ENCODE measurements at regions of chr9 and their contacts with region 1.

Region 1: DNA sequence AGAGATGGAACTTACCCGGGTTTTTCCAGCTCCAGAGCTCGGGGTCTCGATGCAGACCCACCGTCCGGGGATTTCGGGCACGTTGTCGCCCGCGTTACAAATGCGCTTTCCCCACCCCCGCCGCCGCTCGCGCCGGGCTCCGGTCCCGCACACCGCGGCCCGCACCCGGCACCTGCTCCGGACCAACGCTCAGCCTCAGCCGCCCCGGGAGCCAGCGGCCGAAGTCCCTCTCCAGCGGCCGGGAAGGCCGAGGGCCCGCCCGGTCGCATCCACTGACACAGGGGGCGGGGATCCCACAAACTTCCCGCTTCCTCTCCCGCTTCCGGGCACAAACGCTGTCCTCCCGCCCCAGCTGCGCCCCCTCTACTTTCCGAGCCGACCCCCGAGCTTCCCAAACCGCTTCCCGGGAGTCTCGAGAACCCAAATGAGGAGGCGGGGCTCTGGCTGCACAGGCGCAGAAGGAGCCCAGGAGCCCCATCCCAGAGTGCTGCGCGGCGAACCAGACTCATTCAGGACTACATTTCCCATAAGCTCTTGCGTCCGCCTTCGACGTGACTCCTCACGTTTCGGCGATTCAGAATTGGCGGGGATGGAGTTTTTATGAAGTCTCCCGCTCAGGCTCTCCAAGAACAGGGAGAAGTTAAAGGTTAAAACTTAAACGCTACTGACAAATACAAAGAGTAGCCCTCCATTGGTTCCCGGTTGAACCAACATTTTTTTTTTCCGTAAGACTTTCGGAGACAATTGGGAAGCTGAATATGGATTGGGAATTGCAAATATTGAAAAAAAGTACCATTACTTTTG is at the start of gene ZNF782:
- DNase-seq: peak; percentile 94
- H3K4me3 ChIP-seq: peak within 1 kb of the TSS; percentile 56 to 76 (median 72)
- H3K27ac ChIP-seq: peak within 1 kb of the TSS; percentile 82 to 88 (median 86)
- H3K4me1 ChIP-seq: peaks cover 9 to 42% (median 24%) of the 10 kb centered on the region in 4 donors
- H3K27me3 ChIP-seq: no peaks in the 10 kb centered on the region
- CTCF ChIP-seq: no peak
- EP300 ChIP-seq: no peak
- POLR2A ChIP-seq: no peak
- total RNA-seq, gene ZNF782: 8.2 to 22.4 (median 18.4) TPM

Region 2: DNA sequence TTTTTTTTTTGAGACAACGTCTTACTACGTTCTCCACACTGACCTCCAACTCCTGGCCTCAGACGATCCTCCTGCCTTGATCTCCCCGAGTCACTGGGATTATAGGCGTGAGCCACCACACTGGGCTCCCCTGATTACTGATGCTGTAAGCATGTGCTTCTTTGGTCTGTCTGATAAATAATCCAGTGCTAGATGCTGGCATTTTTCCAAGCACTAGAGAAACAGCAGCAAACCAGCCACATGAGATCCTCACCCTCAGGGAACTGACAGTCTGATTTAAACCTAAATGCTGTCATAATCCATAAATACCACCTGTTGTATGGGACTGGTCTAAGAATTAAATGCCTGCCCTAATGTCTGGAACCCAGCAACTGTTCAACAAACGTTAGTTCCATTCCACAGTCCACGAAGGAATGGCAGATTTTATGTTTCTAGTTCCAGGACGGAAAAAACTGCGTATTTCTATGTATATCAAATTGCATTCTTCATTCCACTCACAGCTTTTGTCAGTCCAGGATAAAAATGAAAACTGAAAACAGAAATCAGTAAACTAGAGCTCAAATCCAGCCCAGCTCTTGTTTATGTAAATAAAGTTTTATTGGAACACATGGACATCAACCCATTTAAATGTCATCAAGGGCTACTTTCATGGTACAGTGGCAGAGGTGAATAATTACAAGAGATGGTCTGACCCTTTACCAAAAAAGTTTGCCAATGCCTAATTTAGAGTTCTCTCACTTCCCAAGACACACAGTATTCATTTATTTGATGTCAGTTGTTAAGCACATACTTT is 490.9 kb before region 1 on chr9:
- in situ Hi-C with region 1: no loop called
- intact Hi-C with region 1: no loop called
- DNase-seq: no peak
- H3K4me3 ChIP-seq: no peak overlapping the region
- H3K27ac ChIP-seq: no peak overlapping the region
- H3K4me1 ChIP-seq: peaks cover 0 to 5% (median 4%) of the 10 kb centered on the region in 4 donors
- H3K27me3 ChIP-seq: no peaks in the 10 kb centered on the region
- CTCF ChIP-seq: no peak
- EP300 ChIP-seq: no peak
- POLR2A ChIP-seq: no peak

Region 3: GRCh38 chr9:96884438-96884837 is 30.2 kb after region 1 on chr9:
- in situ Hi-C with region 1: no loop called
- intact Hi-C with region 1: no loop called
- DNase-seq: peak; percentile 50
- H3K4me3 ChIP-seq: no peak overlapping the region
- H3K27ac ChIP-seq: no peak overlapping the region
- H3K4me1 ChIP-seq: no peaks in the 10 kb centered on the region
- H3K27me3 ChIP-seq: no peaks in the 10 kb centered on the region
- CTCF ChIP-seq: no peak
- EP300 ChIP-seq: no peak
- POLR2A ChIP-seq: no peak

Region 4: DNA sequence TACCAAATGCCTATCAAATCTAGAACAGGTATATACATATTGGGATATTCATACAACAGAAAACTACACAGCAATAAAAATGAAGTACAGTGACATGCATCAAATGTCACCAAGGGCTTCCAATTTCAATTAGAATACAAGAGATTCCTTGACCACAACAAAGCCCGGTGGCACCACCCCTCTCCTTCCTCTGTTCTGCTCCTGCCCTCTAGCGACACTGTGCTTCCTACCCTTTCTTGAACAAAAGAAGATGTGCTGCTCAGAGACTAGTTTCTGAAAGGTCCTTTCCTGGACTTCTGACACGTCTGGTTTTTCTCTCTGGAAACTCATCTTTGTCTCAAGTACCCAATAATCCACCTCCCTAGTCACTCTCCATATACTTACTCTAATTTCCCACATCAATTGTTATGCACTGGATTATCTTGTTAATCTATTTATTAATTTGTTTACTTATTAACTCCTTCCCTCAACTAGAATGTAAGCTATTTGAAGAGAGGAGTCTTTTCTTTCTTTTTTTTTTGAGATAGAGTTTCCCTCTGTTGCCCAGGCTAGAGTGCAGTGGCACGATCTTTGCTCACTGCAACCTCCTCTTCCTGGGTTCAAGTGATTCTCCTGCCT is 255.0 kb after region 1 on chr9:
- in situ Hi-C with region 1: loop called in 2 of 4 experiments (anchors 25 kb)
- intact Hi-C with region 1: no loop called
- DNase-seq: peak; percentile 67
- H3K4me3 ChIP-seq: no peak overlapping the region
- H3K27ac ChIP-seq: no peak overlapping the region
- H3K4me1 ChIP-seq: no peaks in the 10 kb centered on the region
- H3K27me3 ChIP-seq: no peaks in the 10 kb centered on the region
- CTCF ChIP-seq: peak in 4 of 5 experiments; percentile 32 to 50 (median 47)
- EP300 ChIP-seq: no peak
- POLR2A ChIP-seq: no peak

Region 5: DNA sequence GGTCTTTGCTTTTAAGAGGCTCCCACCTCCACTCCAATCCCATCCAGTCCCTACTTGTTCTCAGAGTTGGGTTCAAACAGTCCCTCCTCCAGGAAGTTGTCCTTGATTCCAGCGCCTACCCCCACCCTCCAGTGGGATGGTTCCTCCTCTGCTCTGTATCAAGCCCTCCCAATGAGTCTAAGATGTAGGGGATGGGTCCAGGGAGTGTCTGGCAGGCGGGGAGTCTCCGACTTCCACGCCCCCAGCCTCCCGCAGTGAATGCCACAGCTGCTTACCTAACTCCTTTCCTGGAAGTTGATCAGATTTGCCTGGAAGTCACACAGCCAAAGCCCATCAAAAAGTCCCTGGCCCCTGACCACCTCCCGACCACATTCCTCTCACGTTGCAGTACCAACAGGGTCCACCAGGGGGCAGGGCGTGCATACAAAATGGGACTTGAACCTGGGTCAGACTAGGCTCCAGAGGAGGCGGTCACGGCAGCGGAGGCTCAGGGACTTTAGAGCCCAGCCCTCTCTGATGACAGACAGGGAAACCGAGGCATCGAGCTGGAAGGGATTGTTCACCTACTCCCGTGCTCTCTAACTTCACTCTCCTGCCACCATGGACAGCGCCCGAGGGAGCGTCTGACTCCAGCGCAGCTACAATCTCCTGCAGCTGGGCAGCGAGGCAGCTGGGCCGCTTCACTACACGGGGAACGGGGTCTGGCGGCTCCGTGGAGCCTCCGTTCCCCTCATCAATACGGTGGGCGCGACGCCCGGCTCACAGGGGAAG is 532.6 kb after region 1 on chr9:
- in situ Hi-C with region 1: loop called in 3 of 4 experiments (anchors 10 to 25 kb)
- intact Hi-C with region 1: loop called (anchors 10 kb)
- DNase-seq: peak; percentile 78
- H3K4me3 ChIP-seq: peak overlapping the region in 1 of 4 donors; percentile 5
- H3K27ac ChIP-seq: peak overlapping the region in 1 of 4 donors; percentile 13
- H3K4me1 ChIP-seq: peaks cover 2 to 34% (median 15%) of the 10 kb centered on the region in 4 donors
- H3K27me3 ChIP-seq: no peaks in the 10 kb centered on the region
- CTCF ChIP-seq: peak; percentile 92 to 99 (median 97)
- EP300 ChIP-seq: no peak
- POLR2A ChIP-seq: no peak

Region 6: DNA sequence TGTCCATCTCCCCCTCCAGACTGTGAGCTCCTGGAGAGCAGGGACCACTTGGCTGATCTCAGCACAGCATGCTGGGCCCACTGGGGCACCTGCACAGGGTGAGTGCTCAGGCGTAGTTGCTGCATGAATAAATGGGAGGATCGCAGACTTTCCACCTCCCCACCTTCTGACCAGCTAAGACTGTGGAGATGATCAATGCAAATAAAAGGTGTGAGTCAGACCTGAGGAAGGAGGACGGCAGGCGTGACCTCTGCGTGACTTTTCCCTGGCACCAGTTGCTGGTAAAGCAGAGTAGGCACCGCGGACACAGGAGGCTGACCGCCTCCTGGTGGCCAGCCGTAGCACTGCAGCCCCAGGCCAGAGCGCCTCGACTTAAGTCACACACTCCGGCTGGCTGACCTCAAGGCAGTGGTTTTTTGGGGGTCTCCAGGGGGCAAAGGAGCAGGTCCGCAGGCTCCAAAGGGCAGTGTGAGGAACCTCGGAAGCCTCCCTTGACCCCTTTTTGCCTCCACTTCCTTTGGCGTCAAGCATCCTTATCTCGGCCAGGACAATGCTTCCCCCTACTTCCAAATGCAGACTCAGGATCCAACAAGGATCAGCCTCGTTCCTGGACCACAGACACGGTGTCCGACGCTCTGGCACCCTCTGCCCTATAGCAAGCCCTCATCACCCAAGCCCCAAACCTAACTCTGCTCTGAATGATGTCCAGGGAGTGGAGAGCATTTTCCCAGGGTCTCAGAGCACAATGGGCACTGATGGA is 544.9 kb after region 1 on chr9:
- in situ Hi-C with region 1: loop called in 3 of 4 experiments (anchors 10 to 25 kb)
- intact Hi-C with region 1: loop called (anchors 10 kb)
- DNase-seq: peak; percentile 86
- H3K4me3 ChIP-seq: no peak overlapping the region
- H3K27ac ChIP-seq: no peak overlapping the region
- H3K4me1 ChIP-seq: peaks cover 0 to 4% (median 0%) of the 10 kb centered on the region in 4 donors
- H3K27me3 ChIP-seq: no peaks in the 10 kb centered on the region
- CTCF ChIP-seq: peak; percentile 83 to 97 (median 91)
- EP300 ChIP-seq: no peak
- POLR2A ChIP-seq: no peak

Region 7: GRCh38 chr9:97411789-97412625 is 557.7 kb after region 1 on chr9 and contains the start of gene TDRD7:
- in situ Hi-C with region 1: loop called in 1 of 4 experiments (anchors 10 kb)
- intact Hi-C with region 1: no loop called
- DNase-seq: peak; percentile 93
- H3K4me3 ChIP-seq: peak within 1 kb of the TSS; percentile 79 to 100 (median 95)
- H3K27ac ChIP-seq: peak within 1 kb of the TSS; percentile 91 to 98 (median 95)
- H3K4me1 ChIP-seq: peaks cover 12 to 45% (median 22%) of the 10 kb centered on the region in 4 donors
- H3K27me3 ChIP-seq: no peaks in the 10 kb centered on the region
- CTCF ChIP-seq: peak; percentile 94 to 100 (median 99)
- EP300 ChIP-seq: peak; percentile 79
- POLR2A ChIP-seq: peak; percentile 56
- total RNA-seq, gene TDRD7: 15.0 to 47.4 (median 31.4) TPM

Region 8: DNA sequence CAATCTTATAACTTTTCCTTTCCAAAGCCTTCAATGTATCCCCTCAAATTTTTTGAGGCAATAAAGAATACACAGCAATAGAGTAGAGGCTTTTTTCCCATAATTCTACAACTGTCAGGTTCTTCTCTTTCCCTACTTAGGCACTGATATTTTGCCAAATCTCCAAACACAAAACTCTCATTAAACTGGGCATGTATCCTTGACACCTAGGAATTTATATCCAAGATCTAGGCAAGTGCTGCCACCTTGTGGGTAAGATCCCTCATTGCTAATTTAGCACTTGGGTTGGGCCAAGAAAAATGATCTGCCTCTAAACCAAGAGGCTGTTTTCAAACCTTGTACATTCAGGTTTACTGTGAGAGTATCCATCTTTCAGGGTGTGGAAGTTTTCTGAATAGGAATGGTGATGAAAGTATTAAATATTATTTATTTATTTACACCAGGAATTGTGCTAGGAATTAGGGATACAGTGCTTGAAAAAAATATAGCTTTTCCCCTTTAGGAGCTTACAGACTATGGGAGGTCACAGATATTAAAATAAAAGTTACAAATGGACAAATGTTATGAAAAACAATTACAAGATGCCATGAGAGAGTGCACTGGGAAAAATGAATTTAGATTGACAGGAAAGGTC is 761.3 kb after region 1 on chr9:
- in situ Hi-C with region 1: loop called in 3 of 4 experiments (anchors 25 kb)
- intact Hi-C with region 1: no loop called
- DNase-seq: peak; percentile 70
- H3K4me3 ChIP-seq: no peak overlapping the region
- H3K27ac ChIP-seq: no peak overlapping the region
- H3K4me1 ChIP-seq: peaks cover 0 to 10% (median 1%) of the 10 kb centered on the region in 4 donors
- H3K27me3 ChIP-seq: no peaks in the 10 kb centered on the region
- CTCF ChIP-seq: peak; percentile 81 to 88 (median 82)
- EP300 ChIP-seq: no peak
- POLR2A ChIP-seq: no peak